GM12878 (cell line): ENCODE measurements at regions of chr1 and their contacts with region 1.

Region 1: GRCh38 chr1:3910857-3911845 is 11.1 kb upstream of the C1orf174 start:
- DNase-seq: no peak
- ATAC-seq: peak; percentile 96
- H3K4me3 ChIP-seq: no peak overlapping the region
- H3K27ac ChIP-seq: no peak overlapping the region
- H3K4me1 ChIP-seq: no peaks in the 10 kb centered on the region
- H3K27me3 ChIP-seq: peaks cover 3 to 4% of the 10 kb centered on the region in 2 experiments; a peak in 3 of 4 replicates
- CTCF ChIP-seq: peak; percentile 72 to 84 (median 75)
- EP300 ChIP-seq: no peak
- POLR2A ChIP-seq: no peak
- RAD21 ChIP-seq: peak; percentile 94

Region 2: DNA sequence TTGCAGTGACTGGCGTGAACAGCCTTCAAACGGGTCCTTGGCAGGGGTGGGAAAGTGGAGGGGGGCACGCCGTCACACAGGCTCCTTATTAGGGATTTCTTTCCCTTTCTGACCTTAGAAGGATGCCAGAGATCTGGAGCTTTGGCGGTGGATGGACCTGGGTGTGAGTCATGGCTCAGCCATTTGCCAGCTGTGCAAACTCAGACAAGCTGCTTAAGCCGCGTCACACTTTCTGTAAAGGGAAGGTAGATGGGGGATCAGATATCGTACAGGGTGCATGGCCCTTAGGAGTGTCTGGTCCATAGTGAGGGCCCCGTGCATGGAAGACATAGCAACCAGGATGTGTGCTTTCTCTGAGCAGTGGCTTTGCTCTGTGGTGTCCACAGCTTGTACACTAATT is 37.2 kb after region 1 on chr1:
- CTCF ChIA-PET with region 1: no interaction called
- POLR2A ChIA-PET with region 1: no interaction called
- RAD21 ChIA-PET with region 1: no interaction called
- SMC1A ChIA-PET with region 1: no interaction called
- in situ Hi-C with region 1: no loop called
- intact Hi-C with region 1: no loop called
- DNase-seq: no peak
- ATAC-seq: no peak
- H3K4me3 ChIP-seq: no peak overlapping the region
- H3K27ac ChIP-seq: no peak overlapping the region
- H3K4me1 ChIP-seq: no peaks in the 10 kb centered on the region
- H3K27me3 ChIP-seq: no peaks in the 10 kb centered on the region; a peak in 1 of 4 replicates
- CTCF ChIP-seq: no peak
- EP300 ChIP-seq: no peak
- POLR2A ChIP-seq: no peak
- RAD21 ChIP-seq: no peak

Region 3: GRCh38 chr1:4652631-4653327 is 741.6 kb after region 1 on chr1:
- CTCF ChIA-PET with region 1: no interaction called
- POLR2A ChIA-PET with region 1: no interaction called
- RAD21 ChIA-PET with region 1: no interaction called
- SMC1A ChIA-PET with region 1: no interaction called
- in situ Hi-C with region 1: no loop called
- intact Hi-C with region 1: loop called (anchors 2 kb)
- DNase-seq: no peak
- ATAC-seq: peak; percentile 86
- H3K4me3 ChIP-seq: no peak overlapping the region
- H3K27ac ChIP-seq: no peak overlapping the region
- H3K4me1 ChIP-seq: no peaks in the 10 kb centered on the region
- H3K27me3 ChIP-seq: peaks cover 0 to 6% of the 10 kb centered on the region in 2 experiments; a peak in 2 of 4 replicates
- CTCF ChIP-seq: peak; percentile 75 to 91 (median 83)
- EP300 ChIP-seq: no peak
- POLR2A ChIP-seq: no peak
- RAD21 ChIP-seq: peak; percentile 47

Region 4: DNA sequence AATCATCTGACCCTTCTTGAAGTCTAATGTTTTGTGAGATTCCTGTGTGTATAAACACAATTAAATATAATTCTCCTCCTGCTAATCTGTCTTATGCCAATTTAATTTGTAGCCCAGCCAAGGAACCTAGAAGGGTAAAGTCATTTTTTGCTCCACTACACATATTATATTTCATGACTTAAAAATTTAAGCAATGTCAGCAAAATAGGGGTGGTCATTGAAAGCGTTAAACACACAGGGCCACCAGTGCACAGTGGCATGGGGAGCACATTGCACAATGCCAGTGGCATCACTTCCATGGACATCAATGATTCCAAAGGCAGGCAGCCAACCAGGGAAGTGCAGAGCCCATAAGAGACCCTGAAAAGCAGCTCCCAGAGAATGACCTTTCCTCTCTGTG is 909.4 kb after region 1 on chr1:
- CTCF ChIA-PET with region 1: no interaction called
- POLR2A ChIA-PET with region 1: no interaction called
- RAD21 ChIA-PET with region 1: no interaction called
- SMC1A ChIA-PET with region 1: no interaction called
- in situ Hi-C with region 1: loop called (anchors 5 kb)
- intact Hi-C with region 1: loop called (anchors 5 kb)
- DNase-seq: no peak
- ATAC-seq: no peak
- H3K4me3 ChIP-seq: no peak overlapping the region
- H3K27ac ChIP-seq: no peak overlapping the region
- H3K4me1 ChIP-seq: no peaks in the 10 kb centered on the region
- H3K27me3 ChIP-seq: no peaks in the 10 kb centered on the region
- CTCF ChIP-seq: no peak
- EP300 ChIP-seq: no peak
- POLR2A ChIP-seq: no peak
- RAD21 ChIP-seq: no peak

Region 5: DNA sequence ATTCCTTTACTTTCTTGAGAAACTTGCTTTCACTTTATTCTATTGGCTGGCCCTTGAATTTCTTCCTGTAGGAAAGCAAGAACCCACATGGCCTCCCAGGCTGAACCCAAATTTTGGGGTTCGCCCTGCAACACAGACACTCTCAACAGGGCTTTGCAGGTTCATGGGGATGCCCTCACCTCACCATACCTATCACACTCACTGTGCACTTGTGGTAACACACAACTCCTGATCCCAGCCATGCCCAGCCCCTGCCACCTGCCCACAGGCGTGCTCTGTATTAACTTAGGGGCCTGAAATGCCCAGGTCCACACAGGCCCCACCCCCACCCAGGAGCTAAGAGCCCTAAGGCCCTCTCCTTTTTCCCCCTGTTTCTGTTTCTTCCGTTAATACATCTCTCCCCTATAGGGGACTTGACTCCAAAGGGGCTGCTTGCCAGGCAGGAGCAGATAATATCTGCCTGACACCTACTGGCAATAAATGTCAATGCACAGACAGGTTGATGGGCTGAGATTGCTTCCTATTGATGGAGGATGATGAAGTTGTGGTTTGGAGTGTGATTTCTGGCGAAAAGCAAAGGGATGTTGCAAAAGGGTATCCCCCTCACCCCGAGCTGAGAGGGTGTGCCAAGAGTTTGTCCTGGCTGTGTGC is 914.8 kb after region 1 on chr1:
- CTCF ChIA-PET with region 1: interaction called, 3 read pairs
- POLR2A ChIA-PET with region 1: no interaction called
- RAD21 ChIA-PET with region 1: no interaction called
- SMC1A ChIA-PET with region 1: no interaction called
- in situ Hi-C with region 1: loop called (anchors 5 kb)
- intact Hi-C with region 1: loop called (anchors 5 kb)
- DNase-seq: no peak
- ATAC-seq: no peak
- H3K4me3 ChIP-seq: no peak overlapping the region
- H3K27ac ChIP-seq: no peak overlapping the region
- H3K4me1 ChIP-seq: no peaks in the 10 kb centered on the region
- H3K27me3 ChIP-seq: no peaks in the 10 kb centered on the region
- CTCF ChIP-seq: peak; percentile 43 to 63 (median 58); a peak in 5 of 6 replicates
- EP300 ChIP-seq: no peak
- POLR2A ChIP-seq: no peak
- RAD21 ChIP-seq: peak; percentile 82

Region 6: GRCh38 chr1:5745776-5746610 is 1834.8 kb after region 1 on chr1:
- CTCF ChIA-PET with region 1: no interaction called
- POLR2A ChIA-PET with region 1: no interaction called
- RAD21 ChIA-PET with region 1: interaction called, 3 read pairs
- SMC1A ChIA-PET with region 1: no interaction called
- in situ Hi-C with region 1: loop called (anchors 10 kb)
- intact Hi-C with region 1: loop called (anchors 5 kb)
- DNase-seq: no peak
- ATAC-seq: peak; percentile 98
- H3K4me3 ChIP-seq: no peak overlapping the region
- H3K27ac ChIP-seq: no peak overlapping the region
- H3K4me1 ChIP-seq: no peaks in the 10 kb centered on the region
- H3K27me3 ChIP-seq: peaks cover 0 to 2% of the 10 kb centered on the region in 2 experiments; a peak in 1 of 4 replicates
- CTCF ChIP-seq: peak; percentile 94 to 97 (median 96)
- EP300 ChIP-seq: no peak
- POLR2A ChIP-seq: no peak
- RAD21 ChIP-seq: peak; percentile 86